K562 (cell line): ENCODE measurements at regions of chr7 and their contacts with region 1.

Region 1: DNA sequence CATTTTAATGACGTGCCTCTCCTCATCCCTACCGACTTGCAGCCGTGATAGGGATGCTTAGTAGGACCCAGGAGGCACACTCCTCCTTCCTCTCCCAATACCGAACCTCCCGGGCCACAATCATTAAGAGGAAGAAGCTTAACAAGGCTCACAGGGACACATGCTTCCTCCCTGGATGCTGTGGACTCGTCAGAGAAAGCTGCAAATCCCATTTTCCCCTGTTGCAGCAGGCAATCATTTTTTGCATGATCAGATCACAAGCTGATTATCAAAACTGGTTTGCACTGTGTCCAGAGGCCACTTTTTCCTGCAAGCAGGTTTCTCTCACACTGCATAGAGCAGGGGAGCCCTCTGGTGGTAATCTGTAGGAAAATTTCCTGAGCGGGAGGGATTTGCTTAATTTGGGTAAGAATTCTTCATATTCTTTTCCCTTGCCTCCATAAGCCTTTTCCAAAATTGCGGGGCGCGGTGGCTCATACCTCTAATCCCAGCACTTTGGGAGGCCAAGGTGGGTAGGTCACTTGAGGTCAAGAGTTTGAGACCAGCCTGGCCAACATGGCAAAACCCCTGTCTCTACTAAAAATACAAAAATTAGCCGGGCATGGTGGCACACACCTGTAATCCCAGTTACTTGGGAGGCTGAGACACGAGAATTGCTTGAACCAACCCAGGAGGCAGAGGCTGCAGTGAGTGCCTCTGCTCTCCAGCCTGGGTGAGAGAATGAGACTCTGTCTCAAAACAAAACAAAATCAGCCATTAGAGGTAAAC is 16.1 kb upstream of the LAMB4 start:
- DNase-seq: peak; percentile 54 to 88 (median 66)
- ATAC-seq: peak; percentile 83
- H3K4me3 ChIP-seq: no peak overlapping the region
- H3K27ac ChIP-seq: no peak overlapping the region
- H3K4me1 ChIP-seq: 0 out of 5 replicates have a peak, but pooled peaks cover 0 to 3% of the 10 kb centered on the region in 2 experiments
- H3K27me3 ChIP-seq: peaks cover 0 to 4% of the 10 kb centered on the region in 2 experiments; a peak in 2 of 5 replicates
- CTCF ChIP-seq: peak; percentile 93 to 98 (median 94)
- EP300 ChIP-seq: no peak
- POLR2A ChIP-seq: no peak
- RAD21 ChIP-seq: peak; percentile 99 to 100

Region 2: GRCh38 chr7:107201795-107202450 is 944.3 kb before region 1 on chr7:
- CTCF ChIA-PET with region 1: interaction called, 4 read pairs
- POLR2A ChIA-PET with region 1: no interaction called
- in situ Hi-C with region 1: loop called (anchors 25 kb)
- intact Hi-C with region 1: loop called (anchors 5 kb)
- DNase-seq: peak; percentile 59 to 68 (median 64)
- ATAC-seq: peak; percentile 90
- H3K4me3 ChIP-seq: no peak overlapping the region
- H3K27ac ChIP-seq: no peak overlapping the region
- H3K4me1 ChIP-seq: peaks cover 0 to 5% of the 10 kb centered on the region in 2 experiments; a peak in 1 of 5 replicates
- H3K27me3 ChIP-seq: no peaks in the 10 kb centered on the region
- CTCF ChIP-seq: peak; percentile 77 to 84 (median 80)
- EP300 ChIP-seq: no peak
- POLR2A ChIP-seq: no peak
- RAD21 ChIP-seq: peak; percentile 73 to 80

Region 3: GRCh38 chr7:107462740-107463444 is 683.4 kb before region 1 on chr7:
- CTCF ChIA-PET with region 1: interaction called, 9 read pairs
- POLR2A ChIA-PET with region 1: no interaction called
- in situ Hi-C with region 1: no loop called
- intact Hi-C with region 1: loop called (anchors 10 kb)
- DNase-seq: peak; percentile 20 to 77 (median 38)
- ATAC-seq: peak; percentile 92
- H3K4me3 ChIP-seq: no peak overlapping the region
- H3K27ac ChIP-seq: no peak overlapping the region
- H3K4me1 ChIP-seq: no peaks in the 10 kb centered on the region
- H3K27me3 ChIP-seq: no peaks in the 10 kb centered on the region
- CTCF ChIP-seq: peak; percentile 77 to 97 (median 82)
- EP300 ChIP-seq: 0 out of 2 replicates have a peak, but pooled peaks have one; percentile 24
- POLR2A ChIP-seq: no peak
- RAD21 ChIP-seq: peak; percentile 94 to 97

Region 4: DNA sequence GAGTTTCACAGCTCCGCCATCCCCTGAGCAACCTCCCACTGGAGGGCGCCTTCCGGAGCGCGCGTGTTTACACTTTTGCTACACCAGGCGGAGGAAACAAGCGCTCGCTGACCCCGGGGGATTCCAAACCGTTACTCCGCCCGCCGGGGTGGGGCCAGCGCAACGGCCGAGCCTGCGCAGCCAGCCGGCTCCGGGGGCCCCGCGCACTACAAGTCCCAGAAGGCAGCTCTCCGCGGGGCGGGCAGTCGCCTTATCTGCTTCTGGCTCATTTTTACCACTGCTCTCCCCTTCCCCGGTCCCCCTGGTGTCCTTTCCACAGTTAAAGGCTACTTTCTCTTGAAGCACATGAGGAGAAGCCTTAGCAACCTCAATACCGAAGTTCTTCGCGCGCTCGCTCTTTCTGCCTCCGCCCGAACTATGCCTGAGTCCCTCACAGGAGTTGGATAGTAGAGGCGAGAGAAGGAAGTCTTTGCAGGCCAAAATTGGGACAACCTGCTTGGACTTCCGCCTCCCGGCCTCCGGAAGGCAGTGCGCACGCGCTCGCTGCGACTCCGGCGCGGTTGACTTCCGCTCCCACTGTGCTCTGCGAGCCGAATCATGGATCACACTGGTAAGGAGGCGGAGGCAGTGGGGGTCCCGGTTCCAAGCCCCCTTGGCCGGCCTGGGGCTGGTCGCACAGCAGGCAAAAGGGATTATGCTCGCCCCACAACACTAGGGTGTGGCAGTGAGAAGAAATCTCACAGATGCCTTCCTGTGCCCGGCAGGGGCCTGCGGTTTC is 402.5 kb before region 1 on chr7 and contains the start of gene CBLL1:
- CTCF ChIA-PET with region 1: interaction called, 6 read pairs
- POLR2A ChIA-PET with region 1: no interaction called
- in situ Hi-C with region 1: loop called (anchors 25 kb)
- intact Hi-C with region 1: loop called (anchors 5 kb)
- DNase-seq: peak; percentile 95 to 99 (median 96)
- ATAC-seq: peak; percentile 97
- H3K4me3 ChIP-seq: peak within 1 kb of the TSS; percentile 93
- H3K27ac ChIP-seq: peak within 1 kb of the TSS; percentile 100
- H3K4me1 ChIP-seq: peaks cover 3 to 21% of the 10 kb centered on the region in 2 experiments
- H3K27me3 ChIP-seq: no peaks in the 10 kb centered on the region
- CTCF ChIP-seq: peak; percentile 96 to 98 (median 97)
- EP300 ChIP-seq: peak; percentile 78; the same call in 1 of the 2 replicates
- POLR2A ChIP-seq: peak; percentile 99
- RAD21 ChIP-seq: peak; percentile 81 to 96
- polyA plus RNA-seq, gene CBLL1: 17.4 to 35.4 TPM

Region 5: DNA sequence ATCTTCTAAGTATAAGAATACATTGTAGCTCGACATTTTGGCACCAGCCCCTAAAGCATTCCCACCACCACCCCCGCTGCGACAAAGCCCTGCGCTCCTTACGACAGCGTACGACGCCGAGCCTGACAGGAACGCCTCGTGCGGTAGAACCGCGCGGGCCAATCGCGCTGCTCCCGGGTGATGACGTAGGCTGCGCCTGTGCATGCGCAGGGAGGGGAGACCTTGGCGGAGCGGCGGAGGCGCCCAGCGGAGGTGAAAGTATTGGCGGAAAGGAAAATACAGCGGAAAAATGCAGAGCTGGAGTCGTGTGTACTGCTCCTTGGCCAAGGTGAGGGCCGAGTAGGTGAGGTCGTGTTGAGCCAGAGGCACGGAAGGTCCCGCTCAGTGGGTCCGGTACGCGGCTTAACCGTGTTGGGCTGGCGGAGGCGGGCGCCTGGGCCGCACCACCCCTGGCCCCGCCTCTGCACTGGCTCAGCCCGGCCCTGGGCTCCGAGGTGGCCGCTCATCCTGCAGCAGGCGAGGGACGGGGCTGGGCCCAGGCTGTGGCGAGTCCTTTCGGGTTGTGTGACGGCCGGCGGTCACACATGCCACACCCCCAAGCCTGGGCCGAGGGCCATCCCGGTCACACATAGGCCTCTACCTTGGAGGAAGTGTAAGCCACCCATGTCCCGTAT is 255.2 kb before region 1 on chr7 and contains the start of gene DLD:
- CTCF ChIA-PET with region 1: no interaction called
- POLR2A ChIA-PET with region 1: no interaction called
- in situ Hi-C with region 1: no loop called
- intact Hi-C with region 1: loop called (anchors 5 kb)
- DNase-seq: peak; percentile 98 to 99 (median 98)
- ATAC-seq: peak; percentile 96
- H3K4me3 ChIP-seq: peak within 1 kb of the TSS; percentile 55
- H3K27ac ChIP-seq: peak within 1 kb of the TSS; percentile 93
- H3K4me1 ChIP-seq: peaks cover 12 to 27% of the 10 kb centered on the region in 2 experiments; a peak in 4 of 5 replicates
- H3K27me3 ChIP-seq: no peaks in the 10 kb centered on the region; a peak in 1 of 5 replicates
- CTCF ChIP-seq: 0 out of 6 replicates have a peak, but pooled peaks of 1 of the 3 experiments have one; percentile 6
- EP300 ChIP-seq: 0 out of 2 replicates have a peak, but pooled peaks have one; percentile 17
- POLR2A ChIP-seq: peak; percentile 99
- RAD21 ChIP-seq: no peak
- polyA plus RNA-seq, gene DLD: 406 to 588 TPM

Region 6: DNA sequence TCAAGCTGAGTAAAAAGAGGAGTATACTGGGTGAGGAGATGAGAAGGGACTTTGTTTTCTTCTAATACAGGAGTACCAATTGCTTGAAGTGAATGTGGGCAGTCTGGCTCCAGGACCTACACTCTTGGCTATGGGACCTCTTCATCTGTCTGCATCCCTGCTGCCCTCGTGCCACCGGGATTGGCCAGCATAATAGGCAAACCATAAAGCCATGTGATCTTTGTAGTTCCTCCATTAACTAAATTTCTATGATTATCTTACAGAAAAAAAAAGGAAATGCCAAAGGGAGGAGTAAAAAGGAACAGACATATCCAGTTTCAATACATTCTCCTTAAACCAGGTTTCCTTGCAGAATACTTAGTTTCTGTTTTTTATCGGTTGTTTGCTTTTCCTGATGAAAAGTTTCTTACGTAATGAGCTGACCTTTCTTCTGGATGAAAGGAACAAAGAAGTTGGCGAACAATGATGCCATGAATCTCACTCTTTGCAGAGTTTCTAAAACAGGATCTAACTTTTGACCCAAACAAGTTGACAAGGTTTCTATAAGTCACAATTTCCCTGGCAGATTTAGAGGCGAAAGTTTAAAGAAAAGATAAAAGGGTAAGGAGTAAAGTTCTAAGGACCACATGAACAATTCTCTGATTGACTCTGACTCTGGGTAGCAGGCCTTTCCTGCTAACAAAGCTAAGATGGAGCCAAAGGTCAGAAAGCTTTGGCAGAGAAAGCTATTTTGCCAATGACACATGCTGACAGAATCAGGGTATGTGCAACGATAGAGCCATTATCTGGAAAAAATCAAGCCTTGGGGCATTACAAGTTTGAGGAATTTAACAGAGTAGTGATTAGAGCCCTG is 197.4 kb before region 1 on chr7:
- CTCF ChIA-PET with region 1: no interaction called
- POLR2A ChIA-PET with region 1: no interaction called
- in situ Hi-C with region 1: no loop called
- intact Hi-C with region 1: loop called (anchors 5 kb)
- DNase-seq: no peak
- ATAC-seq: no peak
- H3K4me3 ChIP-seq: no peak overlapping the region
- H3K27ac ChIP-seq: no peak overlapping the region
- H3K4me1 ChIP-seq: peaks cover 0 to 3% of the 10 kb centered on the region in 2 experiments; a peak in 1 of 5 replicates
- H3K27me3 ChIP-seq: no peaks in the 10 kb centered on the region
- CTCF ChIP-seq: no peak
- EP300 ChIP-seq: no peak
- POLR2A ChIP-seq: no peak
- RAD21 ChIP-seq: no peak

Region 7: GRCh38 chr7:108000875-108001763 is 145.1 kb before region 1 on chr7:
- CTCF ChIA-PET with region 1: no interaction called
- POLR2A ChIA-PET with region 1: no interaction called
- in situ Hi-C with region 1: no loop called
- intact Hi-C with region 1: no loop called
- DNase-seq: no peak
- ATAC-seq: no peak
- H3K4me3 ChIP-seq: no peak overlapping the region
- H3K27ac ChIP-seq: no peak overlapping the region
- H3K4me1 ChIP-seq: peaks cover 25 to 27% of the 10 kb centered on the region in 2 experiments
- H3K27me3 ChIP-seq: peaks cover 0 to 4% of the 10 kb centered on the region in 2 experiments; a peak in 1 of 5 replicates
- CTCF ChIP-seq: no peak
- EP300 ChIP-seq: no peak
- POLR2A ChIP-seq: no peak
- RAD21 ChIP-seq: no peak

Region 8: DNA sequence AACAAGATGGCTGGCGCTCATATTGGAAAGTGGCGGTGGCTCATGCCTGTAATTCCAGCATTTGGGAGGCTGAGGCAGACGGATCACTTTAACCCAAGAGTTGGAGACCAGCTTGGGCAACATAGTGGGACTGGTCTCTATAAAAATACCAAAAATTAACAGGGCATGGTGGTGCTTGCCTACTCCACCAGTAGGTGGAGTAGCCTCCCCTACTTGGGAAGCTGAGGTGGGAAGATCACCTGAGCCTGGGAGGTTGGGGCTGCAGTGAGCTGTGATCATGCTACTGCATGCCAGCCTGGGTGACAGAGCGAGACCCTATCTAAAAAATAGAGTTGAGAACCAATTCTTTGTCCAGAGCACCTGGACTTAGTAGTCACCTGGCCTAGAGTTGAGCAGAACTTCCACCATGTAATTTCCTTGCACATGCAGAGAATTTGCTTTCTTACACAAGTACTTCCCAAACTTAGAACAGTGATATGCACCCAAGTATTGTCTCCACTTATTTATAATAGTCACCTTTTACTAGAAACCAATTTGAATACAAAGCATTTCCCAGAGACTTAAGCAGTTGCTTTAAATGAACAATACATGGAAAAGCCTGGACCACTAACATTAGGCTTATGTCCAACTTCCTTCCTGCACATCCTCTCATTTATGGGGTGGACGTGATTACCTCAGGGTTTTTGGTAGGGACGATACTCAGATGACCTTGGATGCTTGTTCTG is 32.0 kb before region 1 on chr7:
- CTCF ChIA-PET with region 1: interaction called, 23 read pairs
- POLR2A ChIA-PET with region 1: interaction called, 4 read pairs
- in situ Hi-C with region 1: loop called (anchors 5 kb)
- intact Hi-C with region 1: loop called (anchors 1 kb)
- DNase-seq: peak in 2 of 4 experiments; percentile 54 to 68
- ATAC-seq: peak; percentile 94
- H3K4me3 ChIP-seq: no peak overlapping the region
- H3K27ac ChIP-seq: no peak overlapping the region
- H3K4me1 ChIP-seq: peaks cover 0 to 3% of the 10 kb centered on the region in 2 experiments; a peak in 1 of 5 replicates
- H3K27me3 ChIP-seq: no peaks in the 10 kb centered on the region
- CTCF ChIP-seq: peak; percentile 82 to 94 (median 93)
- EP300 ChIP-seq: no peak
- POLR2A ChIP-seq: no peak
- RAD21 ChIP-seq: peak; percentile 76 to 85

Region 9: DNA sequence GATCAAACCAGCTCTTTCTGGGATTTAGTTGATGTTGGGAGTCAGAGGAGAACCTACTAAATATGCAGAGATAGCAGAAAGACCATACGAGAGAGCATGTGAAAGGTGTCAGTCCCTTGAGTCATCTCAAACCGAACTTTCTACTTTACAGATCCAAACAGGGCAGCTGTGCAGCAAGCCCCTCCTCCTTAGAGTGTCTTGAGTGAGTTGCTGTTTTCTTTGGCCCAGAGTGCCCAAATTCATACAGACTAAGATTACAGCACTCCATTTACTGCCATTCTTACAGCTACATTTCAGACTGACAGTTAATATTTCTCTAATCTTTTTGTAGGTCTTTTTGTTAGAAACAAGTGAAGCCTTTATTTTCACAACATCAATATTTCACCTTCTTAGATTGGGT is 256.6 kb after region 1 on chr7:
- CTCF ChIA-PET with region 1: no interaction called
- POLR2A ChIA-PET with region 1: no interaction called
- in situ Hi-C with region 1: no loop called
- intact Hi-C with region 1: no loop called
- DNase-seq: no peak
- ATAC-seq: peak; percentile 59
- H3K4me3 ChIP-seq: no peak overlapping the region
- H3K27ac ChIP-seq: no peak overlapping the region
- H3K4me1 ChIP-seq: no peaks in the 10 kb centered on the region
- H3K27me3 ChIP-seq: peaks cover 24 to 33% of the 10 kb centered on the region in 2 experiments; a peak in 4 of 5 replicates
- CTCF ChIP-seq: no peak
- EP300 ChIP-seq: no peak
- POLR2A ChIP-seq: no peak
- RAD21 ChIP-seq: no peak